ENCODE measurements at regions of chr11 and their contacts with region 1.

Region 1: GRCh38 chr11:125592305-125593112 is at the start of gene STT3A:
- DNase-seq: peak; percentile 100
- H3K4me3 Mint-ChIP-seq: peak within 1 kb of the TSS; percentile 93
- H3K27ac Mint-ChIP-seq: peak within 1 kb of the TSS; percentile 96
- H3K4me1 Mint-ChIP-seq: peaks cover 24% of the 10 kb centered on the region
- H3K27me3 Mint-ChIP-seq: no peaks in the 10 kb centered on the region
- CTCF ChIP-seq: no peak
- total RNA-seq, gene STT3A: 293 and 414 TPM in 2 replicates

Region 2: GRCh38 chr11:125603207-125603606 is 10.7 kb after region 1 on chr11:
- CTCF ChIA-PET with region 1: interaction called, 3 read pairs
- POLR2A ChIA-PET with region 1: interaction called, 20 read pairs
- intact Hi-C with region 1: no loop called
- DNase-seq: no peak
- H3K4me3 Mint-ChIP-seq: no peak overlapping the region
- H3K27ac Mint-ChIP-seq: no peak overlapping the region
- H3K4me1 Mint-ChIP-seq: no peaks in the 10 kb centered on the region
- H3K27me3 Mint-ChIP-seq: no peaks in the 10 kb centered on the region
- CTCF ChIP-seq: no peak

Region 3: GRCh38 chr11:125887373-125888324 is 295.1 kb after region 1 on chr11 and contains the start of gene HYLS1:
- CTCF ChIA-PET with region 1: interaction called, 3 read pairs
- POLR2A ChIA-PET with region 1: interaction called, 23 read pairs
- intact Hi-C with region 1: no loop called
- DNase-seq: peak; percentile 96
- H3K4me3 Mint-ChIP-seq: peak within 1 kb of the TSS; percentile 83
- H3K27ac Mint-ChIP-seq: peak within 1 kb of the TSS; percentile 70
- H3K4me1 Mint-ChIP-seq: peaks cover 15% of the 10 kb centered on the region
- H3K27me3 Mint-ChIP-seq: no peaks in the 10 kb centered on the region
- CTCF ChIP-seq: no peak
- total RNA-seq, gene HYLS1: 7.9 and 10.2 TPM in 2 replicates

Measured in MCF 10A (cell line).